ENCODE measurements at regions of chr3 and their contacts with region 1.

Region 1: DNA sequence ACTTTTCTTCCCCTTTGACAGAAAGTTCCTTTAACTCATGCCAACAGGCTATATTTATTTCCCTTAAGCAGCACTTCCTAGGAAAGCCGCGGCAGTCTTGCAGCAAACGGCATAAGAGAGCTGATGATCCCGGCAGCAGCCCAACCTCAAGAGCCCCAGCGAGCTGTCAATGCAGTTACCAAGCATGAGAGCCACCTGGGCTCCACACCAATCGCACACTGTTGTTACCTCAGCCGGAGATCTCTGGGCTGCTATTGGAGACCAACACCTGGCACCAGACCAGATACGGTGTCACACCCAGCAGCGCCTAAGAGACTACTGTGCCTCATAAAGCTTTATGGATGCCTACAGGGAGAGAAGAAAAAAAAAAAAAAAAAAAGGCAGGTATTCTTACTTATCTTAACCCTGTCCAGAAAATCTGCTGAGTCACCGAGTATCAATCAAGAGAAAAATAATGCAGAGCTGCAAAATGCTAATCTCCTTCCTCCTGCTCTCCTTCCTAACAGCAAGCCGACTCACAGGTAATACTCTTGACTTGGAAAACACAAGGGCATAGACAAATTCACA is 11.7 kb downstream of the ABCC5 start:
- DNase-seq: peak; percentile 64 to 77 (median 75)
- ATAC-seq: peak; percentile 89 to 94 (median 92)
- H3K4me3 ChIP-seq: peak overlapping the region in 1 of 4 donors; percentile 20
- H3K27ac ChIP-seq: peak overlapping the region in 1 of 4 donors; percentile 1
- H3K4me1 ChIP-seq: peaks cover 0 to 9% (median 0%) of the 10 kb centered on the region in 3 donors
- H3K27me3 ChIP-seq: no peaks in the 10 kb centered on the region
- CTCF ChIP-seq: no peak

Region 2: GRCh38 chr3:183904833-183905780 is 100.9 kb before region 1 on chr3:
- intact Hi-C with region 1: loop called in 1 of 3 experiments (anchors 10 kb)
- DNase-seq: no peak
- ATAC-seq: peak in 1 of 4 donors; percentile 21
- H3K4me3 ChIP-seq: no peak overlapping the region
- H3K27ac ChIP-seq: no peak overlapping the region
- H3K4me1 ChIP-seq: no peaks in the 10 kb centered on the region
- H3K27me3 ChIP-seq: no peaks in the 10 kb centered on the region
- CTCF ChIP-seq: no peak

Region 3: GRCh38 chr3:183954875-183955274 is 51.1 kb before region 1 on chr3:
- intact Hi-C with region 1: no loop called
- DNase-seq: no peak
- ATAC-seq: no peak
- H3K4me3 ChIP-seq: no peak overlapping the region
- H3K27ac ChIP-seq: no peak overlapping the region
- H3K4me1 ChIP-seq: no peaks in the 10 kb centered on the region
- H3K27me3 ChIP-seq: no peaks in the 10 kb centered on the region
- CTCF ChIP-seq: no peak

Measured in pancreas (tissue), 10 donors.